ENCODE measurements at regions of chr7 and their contacts with region 1.

Region 1: DNA sequence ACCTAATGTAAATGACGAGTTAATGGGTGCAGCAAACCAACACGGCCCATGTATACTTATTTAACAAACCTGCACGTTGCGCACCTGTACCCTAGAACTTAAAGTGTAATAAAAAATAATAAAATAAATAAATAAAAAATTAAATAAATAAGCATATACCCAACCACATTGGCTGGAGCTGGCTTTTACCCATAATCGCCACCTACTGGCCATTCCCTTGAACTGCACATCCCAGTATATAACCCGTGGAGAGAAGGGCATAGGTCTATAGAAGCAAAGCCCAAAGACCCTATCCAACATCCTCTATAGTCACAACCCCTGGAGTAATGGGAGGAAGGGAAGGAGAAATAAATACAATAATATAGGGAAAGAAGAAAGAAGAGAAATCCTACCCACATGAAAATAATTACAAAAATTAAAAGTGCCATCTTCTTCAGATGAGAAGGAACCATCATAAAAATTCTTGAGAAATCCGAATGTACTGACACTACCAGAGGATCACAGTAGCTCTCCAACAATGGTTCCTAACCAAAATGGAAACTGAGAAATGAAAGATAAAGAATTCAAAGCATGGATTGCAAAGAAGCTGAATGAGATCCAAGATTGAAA is 65.6 kb downstream of the TWIST1 start:
- DNase-seq: peak in 3 of 9 donors; percentile 1 to 26 (median 3)
- ATAC-seq: peak; percentile 36
- H3K4me3 ChIP-seq: no peak overlapping the region
- H3K4me3 Mint-ChIP-seq: no peak overlapping the region
- H3K27ac ChIP-seq: no peak overlapping the region
- H3K27ac Mint-ChIP-seq: no peak overlapping the region
- H3K4me1 ChIP-seq: no peaks in the 10 kb centered on the region
- H3K4me1 Mint-ChIP-seq: no peaks in the 10 kb centered on the region
- H3K27me3 ChIP-seq: no peaks in the 10 kb centered on the region
- H3K27me3 Mint-ChIP-seq: no peaks in the 10 kb centered on the region

Region 2: DNA sequence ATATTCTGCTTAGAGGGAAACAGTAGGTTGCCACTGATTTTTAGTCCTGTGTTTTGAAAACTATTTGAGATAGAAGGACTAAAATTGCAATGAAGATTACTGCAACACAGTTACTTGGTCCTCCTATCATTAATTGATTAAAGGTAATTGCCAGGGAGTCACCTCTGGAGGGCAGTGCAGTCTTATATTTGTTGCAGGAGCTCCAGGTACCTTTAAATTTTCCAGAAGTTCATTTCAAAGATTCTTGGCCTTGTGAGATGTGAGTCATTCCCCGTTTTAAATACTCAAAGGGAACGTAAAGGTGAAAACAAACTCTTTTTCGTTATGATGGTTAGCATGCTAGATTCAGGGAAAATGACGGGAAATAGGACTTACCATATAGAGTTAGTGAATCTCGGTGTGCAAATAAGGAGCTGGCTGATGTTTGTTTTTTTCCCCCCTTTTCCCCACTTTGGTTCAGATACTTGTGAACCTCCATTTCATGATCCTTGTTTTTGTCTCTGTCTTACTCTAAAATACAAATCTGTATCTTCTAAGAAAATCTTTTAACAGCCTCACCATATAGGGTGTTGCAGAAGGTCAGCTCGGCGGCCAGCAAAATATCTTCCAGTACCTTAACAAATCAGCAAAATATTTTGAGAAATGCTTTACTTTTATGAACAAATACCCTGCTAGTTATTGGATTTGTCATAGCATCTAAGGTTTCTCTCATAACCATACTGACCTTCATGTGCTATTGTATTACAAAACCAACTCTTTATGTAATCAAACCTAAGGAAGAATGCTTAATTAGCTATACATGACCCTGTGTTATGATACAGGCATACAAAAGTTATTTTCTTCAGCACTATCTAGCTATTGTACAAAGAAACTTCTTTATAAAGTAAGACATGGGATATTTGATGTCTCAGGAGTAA is 699.3 kb before region 1 on chr7:
- CTCF ChIA-PET with region 1: no interaction called
- POLR2A ChIA-PET with region 1: no interaction called
- intact Hi-C with region 1: loop called in 1 of 2 experiments (anchors 10 kb)
- DNase-seq: no peak
- ATAC-seq: no peak
- H3K4me3 ChIP-seq: no peak overlapping the region
- H3K4me3 Mint-ChIP-seq: no peak overlapping the region
- H3K27ac ChIP-seq: no peak overlapping the region
- H3K27ac Mint-ChIP-seq: no peak overlapping the region
- H3K4me1 ChIP-seq: no peaks in the 10 kb centered on the region
- H3K4me1 Mint-ChIP-seq: peaks cover 0 to 12% (median 6%) of the 10 kb centered on the region in 7 donors
- H3K27me3 ChIP-seq: no peaks in the 10 kb centered on the region
- H3K27me3 Mint-ChIP-seq: peaks cover 0 to 13% (median 4%) of the 10 kb centered on the region in 5 donors

Region 3: GRCh38 chr7:18590744-18591340 is 461.0 kb before region 1 on chr7:
- CTCF ChIA-PET with region 1: no interaction called
- POLR2A ChIA-PET with region 1: no interaction called
- intact Hi-C with region 1: loop called in 1 of 2 experiments (anchors 10 kb)
- DNase-seq: no peak
- ATAC-seq: no peak
- H3K4me3 ChIP-seq: no peak overlapping the region
- H3K4me3 Mint-ChIP-seq: no peak overlapping the region
- H3K27ac ChIP-seq: no peak overlapping the region
- H3K27ac Mint-ChIP-seq: no peak overlapping the region
- H3K4me1 ChIP-seq: no peaks in the 10 kb centered on the region
- H3K4me1 Mint-ChIP-seq: peaks cover 0 to 5% (median 0%) of the 10 kb centered on the region in 7 donors
- H3K27me3 ChIP-seq: no peaks in the 10 kb centered on the region
- H3K27me3 Mint-ChIP-seq: no peaks in the 10 kb centered on the region

Region 4: GRCh38 chr7:18685971-18686370 is 365.9 kb before region 1 on chr7:
- CTCF ChIA-PET with region 1: no interaction called
- POLR2A ChIA-PET with region 1: no interaction called
- intact Hi-C with region 1: loop called in 1 of 2 experiments (anchors 10 kb)
- DNase-seq: no peak
- ATAC-seq: no peak
- H3K4me3 ChIP-seq: no peak overlapping the region
- H3K4me3 Mint-ChIP-seq: no peak overlapping the region
- H3K27ac ChIP-seq: no peak overlapping the region
- H3K27ac Mint-ChIP-seq: no peak overlapping the region
- H3K4me1 ChIP-seq: no peaks in the 10 kb centered on the region
- H3K4me1 Mint-ChIP-seq: peaks cover 0 to 4% (median 0%) of the 10 kb centered on the region in 7 donors
- H3K27me3 ChIP-seq: no peaks in the 10 kb centered on the region
- H3K27me3 Mint-ChIP-seq: no peaks in the 10 kb centered on the region

Region 5: GRCh38 chr7:18753972-18754610 is 297.8 kb before region 1 on chr7:
- CTCF ChIA-PET with region 1: no interaction called
- POLR2A ChIA-PET with region 1: no interaction called
- intact Hi-C with region 1: loop called in 1 of 2 experiments (anchors 10 kb)
- DNase-seq: no peak
- ATAC-seq: no peak
- H3K4me3 ChIP-seq: no peak overlapping the region
- H3K4me3 Mint-ChIP-seq: no peak overlapping the region
- H3K27ac ChIP-seq: no peak overlapping the region
- H3K27ac Mint-ChIP-seq: no peak overlapping the region
- H3K4me1 ChIP-seq: no peaks in the 10 kb centered on the region
- H3K4me1 Mint-ChIP-seq: no peaks in the 10 kb centered on the region
- H3K27me3 ChIP-seq: no peaks in the 10 kb centered on the region
- H3K27me3 Mint-ChIP-seq: no peaks in the 10 kb centered on the region